Adrenal gland (tissue), 19 donors: ENCODE measurements at regions of chr14 and their contacts with region 1.

Region 1: GRCh38 chr14:96297000-96297399 is 41.0 kb downstream of the BDKRB1 start:
- DNase-seq: no peak
- H3K4me3 ChIP-seq: no peak overlapping the region
- H3K27ac ChIP-seq: no peak overlapping the region
- H3K4me1 ChIP-seq: no peaks in the 10 kb centered on the region
- H3K27me3 ChIP-seq: no peaks in the 10 kb centered on the region
- CTCF ChIP-seq: peak; percentile 30 to 67 (median 50)
- POLR2A ChIP-seq: no peak

Region 2: GRCh38 chr14:96038920-96039632 is 257.9 kb before region 1 on chr14 and contains the start of gene C14orf132:
- intact Hi-C with region 1: no loop called
- DNase-seq: peak; percentile 39 to 86 (median 55)
- H3K4me3 ChIP-seq: peak within 1 kb of the TSS in 2 of 4 donors; percentile 45 to 64
- H3K27ac ChIP-seq: peak within 1 kb of the TSS in 4 of 5 donors; percentile 8 to 84 (median 60)
- H3K4me1 ChIP-seq: peaks cover 6 to 23% of the 10 kb centered on the region in 2 donors
- H3K27me3 ChIP-seq: peaks cover 14% of the 10 kb centered on the region
- CTCF ChIP-seq: no peak
- POLR2A ChIP-seq: peak; percentile 49 to 80
- total RNA-seq, gene C14orf132: 4.5 to 34.8 (median 10.3) TPM

Region 3: GRCh38 chr14:96424109-96424989 is 127.3 kb after region 1 on chr14:
- intact Hi-C with region 1: loop called in 1 of 2 experiments (anchors 5 kb)
- DNase-seq: peak in 6 of 7 donors; percentile 19 to 52 (median 28)
- H3K4me3 ChIP-seq: peak overlapping the region in 1 of 4 donors; percentile 59
- H3K27ac ChIP-seq: no peak overlapping the region
- H3K4me1 ChIP-seq: peaks cover 0 to 4% of the 10 kb centered on the region in 2 donors
- H3K27me3 ChIP-seq: no peaks in the 10 kb centered on the region
- CTCF ChIP-seq: peak; percentile 64 to 91 (median 80)
- POLR2A ChIP-seq: no peak